ENCODE measurements at regions of chr18 and their contacts with region 1.

Region 1: DNA sequence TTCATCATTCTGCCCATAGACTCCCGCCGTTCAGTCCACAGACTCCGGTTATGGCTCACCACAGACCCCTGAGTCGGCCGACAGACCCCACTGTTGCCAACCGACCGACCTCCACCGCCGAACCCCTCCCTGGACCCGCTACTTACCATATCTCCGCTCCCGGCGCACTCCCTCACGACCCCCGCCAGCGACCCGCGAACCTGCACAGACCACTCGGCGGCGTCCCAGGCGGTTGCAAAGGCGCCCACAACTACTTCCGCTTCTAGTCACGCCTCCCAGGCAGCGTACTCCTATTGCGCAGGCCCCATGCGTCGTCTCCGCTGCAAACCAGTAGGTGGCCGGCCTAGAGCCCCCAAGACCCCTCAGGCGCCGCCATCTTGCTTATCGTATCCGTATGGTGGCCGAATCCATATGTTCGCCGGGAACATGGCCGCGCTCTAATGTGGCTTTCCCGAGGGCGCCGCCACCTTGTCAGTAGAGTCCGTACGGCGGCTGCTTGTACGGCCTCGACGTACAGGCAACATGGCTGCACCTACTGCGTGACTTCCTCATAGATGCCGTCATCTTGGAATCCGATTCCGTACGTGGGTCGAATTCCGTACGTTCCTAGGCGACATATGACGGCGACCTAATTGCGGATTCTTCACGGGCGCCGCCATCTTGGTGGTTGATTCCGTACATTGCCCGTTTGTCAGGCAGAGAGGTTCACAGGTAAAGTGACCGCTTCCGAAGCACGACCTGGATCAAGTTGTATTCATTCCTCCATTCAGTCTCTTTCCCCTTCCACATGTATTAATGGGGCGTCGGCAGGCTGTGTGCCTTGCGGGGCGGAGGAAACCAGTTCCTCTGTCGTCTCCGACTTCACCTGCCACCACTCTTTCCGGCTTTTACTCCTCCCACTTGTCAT is at the start of gene CXXC1:
- DNase-seq: peak; percentile 99
- ATAC-seq: peak; percentile 91
- H3K4me3 ChIP-seq: peak within 1 kb of the TSS; percentile 64 to 97 (median 90)
- H3K4me3 Mint-ChIP-seq: peak within 1 kb of the TSS; percentile 98
- H3K27ac ChIP-seq: peak within 1 kb of the TSS; percentile 93
- H3K27ac Mint-ChIP-seq: peak within 1 kb of the TSS; percentile 94
- H3K4me1 ChIP-seq: peaks cover 8 to 13% of the 10 kb centered on the region in 2 donors
- H3K4me1 Mint-ChIP-seq: peaks cover 34% of the 10 kb centered on the region
- H3K27me3 ChIP-seq: no peaks in the 10 kb centered on the region
- H3K27me3 Mint-ChIP-seq: no peaks in the 10 kb centered on the region
- CTCF ChIP-seq: peak; percentile 42
- total RNA-seq, gene CXXC1: 136 and 157 TPM in 2 replicates

Region 2: DNA sequence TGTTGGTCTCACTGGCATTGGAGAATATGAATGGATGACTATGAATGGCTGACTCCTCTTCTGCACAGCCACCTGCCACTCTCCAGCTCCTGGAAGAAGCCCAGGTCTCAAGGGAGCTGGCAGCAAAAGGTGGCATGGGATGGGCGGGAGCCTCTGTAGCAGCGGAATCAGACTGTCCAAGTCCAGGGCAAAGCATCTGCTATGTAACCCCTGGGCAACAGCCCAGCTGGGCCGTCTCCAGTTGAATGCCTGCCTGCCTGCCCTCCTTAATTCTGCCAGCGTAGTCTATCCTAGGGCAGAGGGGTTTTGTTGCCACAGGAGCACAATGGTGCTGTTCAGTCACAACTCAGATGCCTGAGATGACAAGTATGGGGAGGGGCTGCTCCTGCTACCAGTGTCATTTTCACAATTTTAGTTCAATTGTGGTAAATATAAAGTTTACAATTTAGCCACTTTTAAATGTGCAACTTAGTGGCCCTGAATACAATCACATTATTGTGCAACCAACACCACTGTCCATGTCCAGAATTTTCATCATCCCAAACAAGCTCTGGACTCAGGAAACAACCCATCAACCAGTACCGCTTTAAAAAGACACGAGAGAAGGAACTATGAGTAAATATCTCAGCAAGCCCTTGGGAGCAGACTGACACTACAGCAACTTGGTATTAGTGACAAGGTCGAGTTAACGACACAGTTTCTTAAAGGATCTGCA is 208.0 kb before region 1 on chr18:
- CTCF ChIA-PET with region 1: no interaction called
- POLR2A ChIA-PET with region 1: no interaction called
- intact Hi-C with region 1: no loop called
- DNase-seq: no peak
- ATAC-seq: no peak
- H3K4me3 ChIP-seq: no peak overlapping the region
- H3K4me3 Mint-ChIP-seq: no peak overlapping the region
- H3K27ac ChIP-seq: no peak overlapping the region
- H3K27ac Mint-ChIP-seq: no peak overlapping the region
- H3K4me1 ChIP-seq: peaks cover 14 to 16% of the 10 kb centered on the region in 2 donors
- H3K4me1 Mint-ChIP-seq: peaks cover 11% of the 10 kb centered on the region
- H3K27me3 ChIP-seq: no peaks in the 10 kb centered on the region
- H3K27me3 Mint-ChIP-seq: peaks cover 53% of the 10 kb centered on the region
- CTCF ChIP-seq: no peak

Region 3: DNA sequence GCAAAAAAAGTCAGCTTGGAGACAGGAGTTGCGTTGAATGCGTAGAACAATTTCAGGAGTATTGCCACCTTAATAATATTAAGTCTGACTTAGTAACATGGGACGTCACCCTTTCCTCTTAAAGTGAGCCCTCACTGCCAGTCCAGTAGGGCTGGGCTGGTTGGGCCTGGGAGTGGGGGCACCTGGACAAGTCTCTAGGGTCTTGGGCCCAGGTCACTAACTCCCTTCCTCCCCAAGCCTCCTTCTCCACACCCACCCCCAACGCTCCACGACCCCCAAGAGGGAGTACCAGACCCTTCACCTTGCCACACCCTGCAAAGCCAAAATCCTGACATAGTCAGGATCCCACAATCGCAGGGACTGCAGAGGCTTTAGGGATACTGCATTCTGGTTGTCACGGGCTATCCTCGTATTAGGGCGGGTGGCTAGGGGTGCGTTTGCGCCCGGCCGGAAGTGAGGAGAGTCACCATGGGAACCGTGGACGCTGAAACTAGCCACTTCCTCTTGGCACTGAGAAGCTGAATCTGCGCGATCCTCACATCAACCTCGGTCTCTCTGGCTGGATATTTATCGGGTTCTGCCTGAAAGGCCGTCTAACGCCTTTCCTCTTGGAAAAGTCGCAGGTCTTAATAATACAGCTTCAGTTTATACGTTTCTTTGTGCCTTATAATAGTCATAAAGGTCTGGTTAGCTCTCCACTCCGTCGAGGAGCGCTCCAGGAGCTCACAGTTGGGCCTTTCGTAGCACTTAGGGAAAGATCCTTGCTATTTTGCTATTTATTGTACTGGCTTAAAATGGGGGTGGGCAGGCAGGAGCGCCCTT is 10.1 kb after region 1 on chr18:
- CTCF ChIA-PET with region 1: no interaction called
- POLR2A ChIA-PET with region 1: no interaction called
- intact Hi-C with region 1: loop called (anchors 1 kb)
- DNase-seq: peak; percentile 92
- ATAC-seq: peak; percentile 98
- H3K4me3 ChIP-seq: peak overlapping the region; percentile 31 to 50 (median 47)
- H3K4me3 Mint-ChIP-seq: peak overlapping the region; percentile 88
- H3K27ac ChIP-seq: no peak overlapping the region
- H3K27ac Mint-ChIP-seq: peak overlapping the region; percentile 77
- H3K4me1 ChIP-seq: peaks cover 13 to 14% of the 10 kb centered on the region in 2 donors
- H3K4me1 Mint-ChIP-seq: peaks cover 13% of the 10 kb centered on the region
- H3K27me3 ChIP-seq: peaks cover 0 to 5% (median 2%) of the 10 kb centered on the region in 4 experiments
- H3K27me3 Mint-ChIP-seq: peaks cover 7% of the 10 kb centered on the region
- CTCF ChIP-seq: no peak

Region 4: GRCh38 chr18:50307738-50308470 is 20.2 kb after region 1 on chr18:
- CTCF ChIA-PET with region 1: no interaction called
- POLR2A ChIA-PET with region 1: no interaction called
- intact Hi-C with region 1: loop called (anchors 1 kb)
- DNase-seq: peak; percentile 92
- ATAC-seq: peak; percentile 98
- H3K4me3 ChIP-seq: peak overlapping the region; percentile 30 to 70 (median 61)
- H3K4me3 Mint-ChIP-seq: peak overlapping the region; percentile 99
- H3K27ac ChIP-seq: peak overlapping the region; percentile 3 to 56
- H3K27ac Mint-ChIP-seq: peak overlapping the region; percentile 87
- H3K4me1 ChIP-seq: peaks cover 33 to 42% of the 10 kb centered on the region in 2 donors
- H3K4me1 Mint-ChIP-seq: peaks cover 38% of the 10 kb centered on the region
- H3K27me3 ChIP-seq: peaks cover 0 to 2% (median 0%) of the 10 kb centered on the region in 4 experiments
- H3K27me3 Mint-ChIP-seq: peaks cover 4% of the 10 kb centered on the region
- CTCF ChIP-seq: no peak

Region 5: DNA sequence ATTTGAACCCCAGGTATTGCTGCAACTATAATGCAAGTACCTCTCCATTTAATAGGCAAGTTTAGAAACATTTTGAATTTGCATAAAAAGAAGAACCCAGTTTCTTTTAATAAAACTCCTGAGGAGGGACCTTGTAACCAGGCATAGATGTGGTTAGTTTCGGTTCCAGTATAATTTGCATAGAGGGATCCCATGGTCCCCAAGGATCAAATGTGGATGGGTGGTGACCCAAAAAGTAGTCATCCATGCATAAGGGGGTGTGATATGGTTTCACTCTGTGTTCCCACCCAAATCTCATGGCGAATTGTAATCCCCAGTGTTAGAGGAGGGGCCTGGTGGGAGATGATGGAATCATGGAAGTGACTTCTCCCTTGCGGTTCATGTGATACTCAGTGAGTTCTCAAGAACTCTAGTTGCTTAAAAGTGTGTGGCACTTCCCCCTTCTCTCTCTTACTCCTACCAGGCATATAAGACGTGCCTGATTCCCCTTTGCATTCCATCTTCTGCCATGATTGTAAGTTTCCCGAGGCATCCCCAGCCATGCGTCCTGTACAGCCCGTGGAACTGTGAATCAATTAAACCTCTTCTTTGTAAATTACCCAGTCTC is 47.0 kb after region 1 on chr18:
- CTCF ChIA-PET with region 1: no interaction called
- POLR2A ChIA-PET with region 1: no interaction called
- intact Hi-C with region 1: loop called (anchors 1 kb)
- DNase-seq: peak; percentile 82
- ATAC-seq: peak; percentile 98
- H3K4me3 ChIP-seq: peak overlapping the region in 3 of 5 experiments; percentile 19 to 57 (median 30)
- H3K4me3 Mint-ChIP-seq: peak overlapping the region; percentile 62
- H3K27ac ChIP-seq: no peak overlapping the region
- H3K27ac Mint-ChIP-seq: peak overlapping the region; percentile 71
- H3K4me1 ChIP-seq: peaks cover 67 to 72% of the 10 kb centered on the region in 2 donors
- H3K4me1 Mint-ChIP-seq: peaks cover 75% of the 10 kb centered on the region
- H3K27me3 ChIP-seq: peaks cover 0 to 5% (median 0%) of the 10 kb centered on the region in 4 experiments
- H3K27me3 Mint-ChIP-seq: peaks cover 3% of the 10 kb centered on the region
- CTCF ChIP-seq: no peak

Region 6: DNA sequence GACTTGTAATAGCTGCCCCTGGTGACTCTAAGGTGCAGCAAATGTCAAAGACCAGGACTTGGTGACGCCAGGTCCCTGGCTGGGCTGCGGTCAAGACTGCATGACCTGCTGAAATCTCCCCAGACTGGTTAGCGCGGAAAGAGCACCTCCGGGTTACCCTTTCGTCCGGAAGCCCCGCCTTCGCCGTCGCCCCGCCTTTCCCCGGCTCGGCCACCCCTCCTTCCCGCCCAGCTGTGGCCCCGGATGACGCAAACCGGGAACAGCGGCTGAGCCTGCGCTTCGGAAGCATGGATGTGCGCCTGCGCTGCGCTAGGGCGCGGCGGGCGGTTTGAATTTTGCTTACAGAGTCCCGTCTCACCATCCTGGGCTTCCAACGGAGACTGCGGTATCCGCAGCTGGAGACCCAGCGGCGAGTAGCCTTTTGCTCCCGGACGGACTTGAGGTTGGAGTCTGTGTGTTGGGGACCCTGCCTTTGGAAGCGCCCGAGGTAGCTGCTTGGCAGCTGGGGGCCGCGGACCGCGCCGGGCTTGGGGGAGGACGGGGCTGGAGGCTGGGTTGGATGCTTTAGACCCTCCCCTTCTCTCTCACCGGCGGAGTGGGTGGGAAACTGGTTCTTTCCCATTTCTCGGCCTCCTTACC is 87.2 kb after region 1 on chr18 and contains the start of gene SKA1:
- CTCF ChIA-PET with region 1: no interaction called
- POLR2A ChIA-PET with region 1: no interaction called
- intact Hi-C with region 1: loop called (anchors 1 kb)
- DNase-seq: peak; percentile 96
- ATAC-seq: peak; percentile 100
- H3K4me3 ChIP-seq: peak within 1 kb of the TSS; percentile 60 to 78 (median 72)
- H3K4me3 Mint-ChIP-seq: peak within 1 kb of the TSS; percentile 85
- H3K27ac ChIP-seq: peak within 1 kb of the TSS; percentile 66 to 83
- H3K27ac Mint-ChIP-seq: peak within 1 kb of the TSS; percentile 89
- H3K4me1 ChIP-seq: peaks cover 5 to 16% of the 10 kb centered on the region in 2 donors
- H3K4me1 Mint-ChIP-seq: peaks cover 15% of the 10 kb centered on the region
- H3K27me3 ChIP-seq: peaks cover 0 to 7% (median 3%) of the 10 kb centered on the region in 4 experiments
- H3K27me3 Mint-ChIP-seq: peaks cover 13% of the 10 kb centered on the region
- CTCF ChIP-seq: no peak
- total RNA-seq, gene SKA1: 0.52 and 0.66 TPM in 2 replicates